Activated B cell treated with CpG ODN at 0.5 μM for 24 hours (primary cell): ENCODE measurements at regions of chr1 and their contacts with region 1.

Region 1: GRCh38 chr1:38071312-38072256 is 25.0 kb upstream of the POU3F1 start:
- DNase-seq: no peak
- ATAC-seq: peak; percentile 82
- H3K4me3 Mint-ChIP-seq: no peak overlapping the region
- H3K27ac Mint-ChIP-seq: no peak overlapping the region
- H3K4me1 Mint-ChIP-seq: peaks cover 4% of the 10 kb centered on the region
- H3K27me3 Mint-ChIP-seq: peaks cover 4% of the 10 kb centered on the region
- CTCF ChIP-seq: no peak

Region 2: GRCh38 chr1:38039331-38040088 is 32.1 kb before region 1 on chr1:
- CTCF ChIA-PET with region 1: interaction called, 21 read pairs
- POLR2A ChIA-PET with region 1: no interaction called
- intact Hi-C with region 1: loop called (anchors 1 kb)
- DNase-seq: no peak
- ATAC-seq: no peak
- H3K4me3 Mint-ChIP-seq: no peak overlapping the region
- H3K27ac Mint-ChIP-seq: no peak overlapping the region
- H3K4me1 Mint-ChIP-seq: peaks cover 11% of the 10 kb centered on the region
- H3K27me3 Mint-ChIP-seq: peaks cover 49% of the 10 kb centered on the region
- CTCF ChIP-seq: no peak

Region 3: DNA sequence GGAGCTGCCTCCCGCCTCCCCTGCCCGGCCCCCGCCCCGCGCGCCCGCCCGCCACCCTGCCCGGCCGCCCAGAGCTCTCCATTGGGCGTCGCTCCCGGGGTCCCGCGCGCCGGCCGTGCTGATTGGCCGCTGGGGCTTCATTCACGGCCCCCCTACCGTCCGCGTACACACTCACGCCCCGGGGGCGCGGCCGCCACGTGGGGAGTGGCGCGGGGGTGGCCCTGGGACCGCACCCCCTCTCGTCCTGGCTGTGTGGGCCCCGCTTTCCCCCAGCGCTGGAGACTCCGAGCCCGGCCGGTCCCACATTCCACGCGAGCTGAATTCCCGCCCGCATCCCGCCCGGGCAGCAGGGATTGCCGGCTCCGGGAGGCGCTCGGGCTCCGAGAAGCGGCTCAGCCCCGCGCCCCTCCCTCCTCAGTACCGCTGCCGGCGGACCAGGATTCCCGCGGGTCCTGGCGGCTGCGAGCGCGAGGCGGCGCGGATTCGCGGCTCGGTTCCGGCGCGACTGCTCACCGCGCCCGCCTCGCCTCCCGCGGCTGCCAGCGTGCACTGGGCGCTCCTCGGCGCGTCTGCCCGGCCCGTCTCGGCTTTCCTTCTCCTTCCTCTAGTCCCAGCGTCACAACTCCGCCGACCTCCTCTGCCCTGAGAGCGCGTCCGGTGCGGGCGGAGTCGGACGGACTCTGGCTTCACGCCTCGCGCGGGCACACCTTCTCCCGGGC is 24.5 kb before region 1 on chr1:
- CTCF ChIA-PET with region 1: interaction called, 21 read pairs
- POLR2A ChIA-PET with region 1: interaction called, 7 read pairs
- intact Hi-C with region 1: no loop called
- DNase-seq: peak; percentile 78
- ATAC-seq: peak; percentile 86
- H3K4me3 Mint-ChIP-seq: peak overlapping the region; percentile 83
- H3K27ac Mint-ChIP-seq: peak overlapping the region; percentile 18
- H3K4me1 Mint-ChIP-seq: peaks cover 29% of the 10 kb centered on the region
- H3K27me3 Mint-ChIP-seq: peaks cover 21% of the 10 kb centered on the region
- CTCF ChIP-seq: no peak

Region 4: DNA sequence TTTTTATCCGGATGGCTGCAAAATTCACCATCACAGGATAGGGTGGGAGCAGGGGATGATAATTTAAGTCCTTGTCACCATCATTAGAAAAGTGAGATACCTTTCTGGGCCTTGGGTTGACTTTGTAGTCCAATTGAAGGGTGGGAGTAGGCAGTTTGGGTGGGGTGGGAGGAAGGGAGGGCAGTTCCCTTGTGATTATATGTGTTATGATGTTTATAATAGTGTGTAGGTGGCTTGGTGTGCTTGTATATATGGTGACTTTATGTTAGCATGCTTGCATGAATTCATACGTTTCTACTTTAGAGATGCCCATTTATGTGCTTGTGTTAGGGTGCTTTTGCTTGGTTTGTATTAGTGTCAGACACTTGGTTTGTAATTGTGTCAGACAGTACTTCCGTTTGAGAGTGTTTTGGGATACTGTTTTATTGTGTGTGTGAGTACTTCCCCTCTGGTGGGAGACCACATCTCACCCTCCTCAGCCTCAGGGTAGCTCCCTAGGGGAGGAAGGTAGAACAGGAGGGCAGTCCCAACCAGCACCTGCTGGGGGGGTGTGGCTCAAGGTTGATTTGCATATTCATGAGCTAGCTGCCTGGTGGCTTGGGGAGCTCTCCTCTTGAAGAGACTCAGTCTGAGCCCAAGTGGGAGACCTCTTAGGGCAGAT is 18.7 kb before region 1 on chr1:
- CTCF ChIA-PET with region 1: interaction called, 15 read pairs
- POLR2A ChIA-PET with region 1: interaction called, 5 read pairs
- intact Hi-C with region 1: no loop called
- DNase-seq: peak; percentile 47
- ATAC-seq: peak; percentile 92
- H3K4me3 Mint-ChIP-seq: peak overlapping the region; percentile 26
- H3K27ac Mint-ChIP-seq: peak overlapping the region; percentile 63
- H3K4me1 Mint-ChIP-seq: peaks cover 35% of the 10 kb centered on the region
- H3K27me3 Mint-ChIP-seq: no peaks in the 10 kb centered on the region
- CTCF ChIP-seq: no peak

Region 5: DNA sequence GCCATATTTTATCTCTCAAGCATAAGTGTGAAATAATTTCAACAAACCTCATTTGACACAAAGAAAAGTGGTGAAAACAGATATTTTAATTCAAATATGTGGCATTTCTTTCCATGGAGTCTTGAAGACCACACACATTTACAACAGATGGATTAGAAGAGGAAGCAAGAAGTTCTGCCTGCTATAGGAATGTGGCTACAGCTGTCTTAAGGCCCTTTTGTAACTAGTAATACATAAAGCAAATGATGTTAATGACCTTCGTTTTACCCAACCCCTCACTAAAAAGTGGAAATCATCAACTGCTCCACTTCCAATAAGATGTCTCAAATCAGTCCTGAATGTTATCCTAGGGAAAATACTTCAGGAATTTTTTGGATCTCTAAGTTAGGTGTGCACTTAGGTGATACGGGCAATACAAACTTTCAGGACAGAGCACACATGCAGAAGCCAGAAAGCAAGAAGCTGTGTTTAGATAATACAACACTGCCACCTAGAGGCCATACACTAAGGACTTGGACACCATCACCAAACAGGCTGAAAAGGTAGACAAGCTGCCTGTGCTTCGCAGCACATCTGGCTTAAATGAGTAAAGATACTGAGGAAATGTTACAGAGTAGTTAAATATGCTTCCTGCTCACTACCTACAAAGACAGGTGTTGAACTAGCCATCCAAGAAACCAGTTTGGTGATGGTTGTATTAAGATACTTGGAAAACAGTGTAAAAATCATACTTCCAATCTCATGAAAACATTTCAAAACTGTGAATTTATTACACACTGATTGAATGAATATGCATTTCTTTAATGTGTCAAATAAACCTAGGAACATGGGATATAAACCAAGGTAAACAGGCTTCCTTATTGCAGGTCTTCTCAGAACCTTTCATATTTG is 763.6 kb after region 1 on chr1:
- CTCF ChIA-PET with region 1: interaction called, 13 read pairs
- POLR2A ChIA-PET with region 1: no interaction called
- intact Hi-C with region 1: no loop called
- DNase-seq: no peak
- ATAC-seq: peak; percentile 82
- H3K4me3 Mint-ChIP-seq: no peak overlapping the region
- H3K27ac Mint-ChIP-seq: no peak overlapping the region
- H3K4me1 Mint-ChIP-seq: peaks cover 7% of the 10 kb centered on the region
- H3K27me3 Mint-ChIP-seq: peaks cover 10% of the 10 kb centered on the region
- CTCF ChIP-seq: no peak